Calu3 (cell line): ENCODE measurements at regions of chr9 and their contacts with region 1.

Region 1: DNA sequence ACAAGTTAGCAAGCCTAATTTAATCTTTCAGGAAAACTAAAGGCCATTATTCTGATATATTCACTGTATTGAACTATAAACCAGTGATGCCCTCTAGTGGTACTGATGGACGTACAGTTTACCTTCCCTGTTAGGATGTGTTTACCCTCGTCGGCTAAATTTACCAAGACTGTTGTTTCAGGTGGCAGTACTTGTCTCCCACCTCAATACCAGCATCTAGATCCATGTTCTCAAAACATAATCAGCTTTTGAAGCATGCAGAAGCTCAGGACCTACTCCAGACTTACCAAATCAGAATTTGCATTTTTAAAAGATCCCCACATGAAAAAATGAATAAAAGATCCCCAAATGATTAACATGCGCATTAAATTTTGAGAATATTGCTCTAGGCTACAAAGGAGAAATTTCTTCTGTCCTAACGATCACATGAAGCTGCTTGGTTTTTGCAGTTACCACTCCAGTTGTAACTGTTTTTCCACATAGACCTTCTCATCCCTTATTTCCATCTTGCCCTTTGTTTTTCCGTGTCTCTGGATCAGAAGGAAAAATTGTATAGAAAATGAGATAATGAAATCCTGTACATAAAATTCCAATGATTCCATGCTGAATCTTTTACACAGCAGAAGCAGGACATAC is 3.2 kb upstream of the BAAT start:
- DNase-seq: peak; percentile 34
- H3K4me3 Mint-ChIP-seq: no peak overlapping the region
- H3K27ac Mint-ChIP-seq: peak overlapping the region; percentile 69
- H3K4me1 Mint-ChIP-seq: peaks cover 38% of the 10 kb centered on the region
- H3K27me3 Mint-ChIP-seq: no peaks in the 10 kb centered on the region
- CTCF ChIP-seq: peak; percentile 19

Region 2: GRCh38 chr9:100714372-100715099 is 673.5 kb before region 1 on chr9:
- CTCF ChIA-PET with region 1: no interaction called
- intact Hi-C with region 1: loop called (anchors 5 kb)
- DNase-seq: peak; percentile 67
- H3K4me3 Mint-ChIP-seq: no peak overlapping the region
- H3K27ac Mint-ChIP-seq: no peak overlapping the region
- H3K4me1 Mint-ChIP-seq: no peaks in the 10 kb centered on the region
- H3K27me3 Mint-ChIP-seq: peaks cover 21% of the 10 kb centered on the region
- CTCF ChIP-seq: peak; percentile 71

Region 3: DNA sequence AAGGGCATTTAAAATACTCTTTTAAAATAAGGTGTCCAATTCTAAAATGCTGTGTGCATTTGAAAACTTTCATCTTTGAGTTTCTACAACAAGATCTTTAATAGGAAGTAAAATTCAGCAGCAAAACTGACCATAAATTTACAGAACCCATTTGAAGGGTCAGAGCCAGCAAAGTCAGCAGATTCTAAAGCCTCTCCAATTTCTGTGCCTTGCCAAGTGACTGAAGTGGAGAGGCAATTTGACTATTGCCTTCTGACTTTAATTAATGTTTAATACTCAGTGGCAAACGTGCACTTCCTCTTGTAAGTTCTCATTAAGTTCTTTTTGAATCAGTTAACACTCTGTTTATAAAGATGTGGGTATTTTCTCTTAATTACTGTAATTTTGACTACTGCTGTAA is 158.4 kb before region 1 on chr9:
- CTCF ChIA-PET with region 1: no interaction called
- intact Hi-C with region 1: loop called (anchors 5 kb)
- DNase-seq: no peak
- H3K4me3 Mint-ChIP-seq: no peak overlapping the region
- H3K27ac Mint-ChIP-seq: no peak overlapping the region
- H3K4me1 Mint-ChIP-seq: no peaks in the 10 kb centered on the region
- H3K27me3 Mint-ChIP-seq: no peaks in the 10 kb centered on the region
- CTCF ChIP-seq: no peak

Region 4: GRCh38 chr9:101326501-101326900 is 61.5 kb before region 1 on chr9:
- CTCF ChIA-PET with region 1: interaction called, 3 read pairs
- intact Hi-C with region 1: loop called (anchors 2 kb)
- DNase-seq: no peak
- H3K4me3 Mint-ChIP-seq: no peak overlapping the region
- H3K27ac Mint-ChIP-seq: peak overlapping the region; percentile 39
- H3K4me1 Mint-ChIP-seq: peaks cover 34% of the 10 kb centered on the region
- H3K27me3 Mint-ChIP-seq: no peaks in the 10 kb centered on the region
- CTCF ChIP-seq: no peak

Region 5: DNA sequence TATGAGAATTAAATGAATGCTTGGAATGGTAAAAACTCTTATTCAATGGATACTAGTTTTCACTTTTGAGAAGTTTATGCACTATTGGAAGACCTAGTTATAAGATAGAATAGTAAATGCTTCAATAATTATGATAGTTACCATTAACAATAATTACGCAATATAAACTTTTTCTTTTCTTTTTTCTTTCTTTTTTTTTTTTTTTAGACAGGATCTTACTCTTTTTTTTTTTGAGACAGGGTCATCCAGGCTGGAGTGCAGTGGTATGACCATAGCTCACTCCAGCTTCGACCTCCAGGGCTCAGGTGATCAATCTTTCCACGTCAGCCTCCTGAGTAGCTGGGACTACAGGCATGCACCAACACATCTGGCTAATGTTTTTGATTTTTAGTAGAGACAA is 41.0 kb after region 1 on chr9:
- CTCF ChIA-PET with region 1: no interaction called
- intact Hi-C with region 1: no loop called
- DNase-seq: no peak
- H3K4me3 Mint-ChIP-seq: no peak overlapping the region
- H3K27ac Mint-ChIP-seq: peak overlapping the region; percentile 8
- H3K4me1 Mint-ChIP-seq: peaks cover 23% of the 10 kb centered on the region
- H3K27me3 Mint-ChIP-seq: no peaks in the 10 kb centered on the region
- CTCF ChIP-seq: no peak

Region 6: GRCh38 chr9:101530077-101530711 is 142.2 kb after region 1 on chr9:
- CTCF ChIA-PET with region 1: no interaction called
- intact Hi-C with region 1: loop called (anchors 5 kb)
- DNase-seq: peak; percentile 69
- H3K4me3 Mint-ChIP-seq: no peak overlapping the region
- H3K27ac Mint-ChIP-seq: no peak overlapping the region
- H3K4me1 Mint-ChIP-seq: no peaks in the 10 kb centered on the region
- H3K27me3 Mint-ChIP-seq: no peaks in the 10 kb centered on the region
- CTCF ChIP-seq: peak; percentile 66